ENCODE measurements at regions of chr10 and their contacts with region 1.

Region 1: GRCh38 chr10:75401569-75402485 is at the start of gene ZNF503:
- DNase-seq: peak; percentile 93 to 97
- ATAC-seq: peak; percentile 75 to 83
- H3K4me3 ChIP-seq: peak within 1 kb of the TSS; percentile 57 to 82 (median 72)
- H3K27ac ChIP-seq: peak within 1 kb of the TSS; percentile 85 to 98 (median 98)
- H3K4me1 ChIP-seq: peaks cover 0 to 30% of the 10 kb centered on the region in 2 donors
- H3K27me3 ChIP-seq: peaks cover 0 to 37% (median 29%) of the 10 kb centered on the region in 3 donors
- CTCF ChIP-seq: peak in 4 of 5 experiments; percentile 15 to 39 (median 34)
- POLR2A ChIP-seq: peak; percentile 86 to 91
- total RNA-seq, gene ZNF503: 1.7 to 2.0 (median 1.8) TPM

Region 2: GRCh38 chr10:75575940-75576339 is 174.1 kb after region 1 on chr10:
- in situ Hi-C with region 1: no loop called
- intact Hi-C with region 1: no loop called
- DNase-seq: no peak
- ATAC-seq: no peak
- H3K4me3 ChIP-seq: no peak overlapping the region
- H3K27ac ChIP-seq: no peak overlapping the region
- H3K4me1 ChIP-seq: no peaks in the 10 kb centered on the region
- H3K27me3 ChIP-seq: no peaks in the 10 kb centered on the region
- CTCF ChIP-seq: no peak
- POLR2A ChIP-seq: no peak

Region 3: DNA sequence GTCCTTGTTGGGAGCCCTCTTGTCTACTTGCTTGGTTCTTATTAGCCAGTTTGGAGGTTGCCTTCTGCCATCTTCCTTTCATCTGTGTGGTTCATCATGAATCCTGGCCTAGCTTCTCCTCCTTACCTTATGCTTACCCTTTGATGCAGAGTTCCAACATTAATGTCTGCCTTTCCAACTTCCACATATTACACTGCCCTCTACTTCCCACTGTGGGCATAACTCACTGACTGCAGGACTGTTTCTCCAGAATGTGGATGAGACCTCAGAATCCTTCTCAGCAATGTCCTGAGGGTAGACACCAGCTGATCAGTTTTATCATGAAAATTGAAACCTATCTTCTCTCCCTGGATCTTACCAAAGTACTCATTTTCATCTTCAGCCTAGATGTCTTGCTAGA is 520.6 kb after region 1 on chr10:
- in situ Hi-C with region 1: no loop called
- intact Hi-C with region 1: loop called (anchors 5 kb)
- DNase-seq: no peak
- ATAC-seq: no peak
- H3K4me3 ChIP-seq: no peak overlapping the region
- H3K27ac ChIP-seq: no peak overlapping the region
- H3K4me1 ChIP-seq: no peaks in the 10 kb centered on the region
- H3K27me3 ChIP-seq: peaks cover 0 to 3% (median 0%) of the 10 kb centered on the region in 3 donors
- CTCF ChIP-seq: no peak
- POLR2A ChIP-seq: no peak

Region 4: DNA sequence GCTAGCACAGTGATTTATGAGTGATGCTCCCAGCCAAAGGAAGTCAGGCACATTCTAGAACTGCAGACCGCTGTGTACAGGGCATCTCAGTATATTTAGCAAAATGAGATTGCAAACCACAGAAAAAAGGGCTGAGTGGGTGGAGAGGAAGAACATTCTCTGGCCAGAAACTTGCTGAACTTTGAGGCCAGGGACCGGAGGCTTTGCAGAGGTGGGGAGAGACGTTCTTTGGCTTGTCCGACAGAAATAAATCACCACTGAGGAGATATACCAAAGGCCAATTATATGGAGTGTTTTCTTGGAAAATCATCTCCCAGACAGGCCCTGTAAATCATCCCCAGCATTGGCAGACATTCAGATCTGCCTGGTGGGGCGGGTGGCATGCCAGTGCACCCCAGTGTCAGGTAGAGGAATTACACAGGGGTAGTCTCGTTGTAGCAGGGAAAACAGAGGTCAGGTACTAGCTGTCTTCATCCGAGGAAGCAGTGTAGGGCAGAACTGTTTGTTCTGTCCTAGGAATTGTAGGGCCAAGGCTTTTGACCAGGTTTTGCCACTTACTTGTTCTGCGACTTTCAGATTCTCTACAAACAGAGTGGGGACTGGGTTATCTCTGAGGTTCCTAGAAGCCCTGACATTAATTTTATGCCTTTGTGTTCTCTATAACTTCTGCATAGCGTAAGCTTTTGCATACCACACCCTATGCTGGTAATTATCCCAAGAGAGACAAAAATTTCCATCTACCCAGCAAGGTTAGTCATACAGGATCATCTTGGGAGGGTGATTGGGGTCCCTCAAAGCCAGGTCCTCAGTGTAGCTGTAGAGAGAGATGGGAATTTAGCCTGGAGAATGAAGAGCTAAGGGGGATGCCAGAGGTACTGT is 685.2 kb after region 1 on chr10:
- in situ Hi-C with region 1: no loop called
- intact Hi-C with region 1: loop called (anchors 2 kb)
- DNase-seq: peak; percentile 67 to 79
- ATAC-seq: peak; percentile 96 to 98
- H3K4me3 ChIP-seq: peak overlapping the region in 2 of 4 donors; percentile 1 to 10
- H3K27ac ChIP-seq: peak overlapping the region; percentile 50 to 78 (median 66)
- H3K4me1 ChIP-seq: peaks cover 18 to 33% of the 10 kb centered on the region in 2 donors
- H3K27me3 ChIP-seq: no peaks in the 10 kb centered on the region
- CTCF ChIP-seq: peak; percentile 54 to 76 (median 66)
- POLR2A ChIP-seq: no peak

Region 5: DNA sequence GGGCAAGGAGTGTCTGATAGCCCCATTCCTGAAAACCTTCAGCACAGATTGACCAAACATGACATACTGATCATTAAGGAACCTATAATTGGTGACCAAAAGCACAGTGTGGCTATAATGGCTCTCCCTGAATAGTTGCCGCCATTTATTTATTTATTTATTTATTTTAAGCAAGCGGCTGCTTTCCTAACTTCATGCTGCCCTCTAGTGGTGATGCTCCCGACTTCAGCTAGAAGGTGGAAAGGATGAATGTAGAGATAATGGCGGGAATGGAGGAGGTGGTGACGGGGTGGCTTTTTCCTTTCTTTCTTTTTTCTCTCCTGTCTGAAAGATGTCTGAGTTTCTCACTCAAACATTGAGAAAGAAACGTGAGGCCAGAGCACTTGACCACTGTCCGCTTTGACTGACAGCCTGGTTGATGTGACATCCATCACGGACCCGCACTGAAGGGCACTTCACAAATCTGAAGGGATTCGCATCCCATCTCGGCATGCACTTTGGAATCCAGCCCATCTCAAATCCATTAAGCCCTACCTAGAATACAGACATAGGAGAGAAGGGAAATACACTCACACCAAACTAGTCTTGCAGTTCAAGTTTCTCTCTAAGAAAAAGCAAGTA is 1145.6 kb after region 1 on chr10:
- in situ Hi-C with region 1: loop called in 2 of 4 experiments (anchors 25 kb)
- intact Hi-C with region 1: loop called (anchors 10 kb)
- DNase-seq: peak; percentile 59 to 69
- ATAC-seq: peak; percentile 56 to 91
- H3K4me3 ChIP-seq: no peak overlapping the region
- H3K27ac ChIP-seq: no peak overlapping the region
- H3K4me1 ChIP-seq: no peaks in the 10 kb centered on the region
- H3K27me3 ChIP-seq: no peaks in the 10 kb centered on the region
- CTCF ChIP-seq: peak; percentile 40 to 81 (median 70)
- POLR2A ChIP-seq: no peak

Measured in gastrocnemius medialis (tissue), 4 donors.